Activated CD4-positive, alpha-beta T cell treated with anti-CD3 and anti-CD28 coated beads, Interleukin-2, amount 10 ng/mL, durations not matched to agents 7 days and 5 days (primary cell): ENCODE measurements at regions of chr11 and their contacts with region 1.

Region 1: GRCh38 chr11:117697321-117697720 is 99.7 kb downstream of the DSCAML1 start:
- DNase-seq: no peak
- H3K4me3 Mint-ChIP-seq: no peak overlapping the region
- H3K27ac Mint-ChIP-seq: no peak overlapping the region
- H3K4me1 Mint-ChIP-seq: peaks cover 8% of the 10 kb centered on the region
- H3K27me3 Mint-ChIP-seq: peaks cover 7% of the 10 kb centered on the region

Region 2: DNA sequence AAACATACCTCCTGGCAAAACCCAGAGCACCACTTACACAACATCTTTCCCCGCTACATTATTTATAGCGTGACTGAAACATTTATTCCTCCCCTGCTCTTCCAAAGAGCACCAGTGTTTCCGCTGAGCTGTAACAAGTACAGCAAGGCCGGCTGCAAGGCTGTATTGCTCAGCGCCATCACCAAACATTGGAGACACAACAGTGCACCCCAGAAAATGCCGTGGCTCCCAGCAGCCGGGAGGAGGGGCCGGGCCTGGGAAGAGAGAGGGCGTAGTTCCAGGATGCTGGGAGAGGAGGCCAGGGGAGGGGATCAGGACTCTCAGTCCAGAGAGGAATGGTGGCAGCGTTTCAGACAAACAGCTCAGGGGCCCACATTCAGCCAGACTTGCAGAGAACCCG is 33.5 kb before region 1 on chr11:
- CTCF ChIA-PET with region 1: no interaction called
- POLR2A ChIA-PET with region 1: no interaction called
- DNase-seq: no peak
- H3K4me3 Mint-ChIP-seq: no peak overlapping the region
- H3K27ac Mint-ChIP-seq: no peak overlapping the region
- H3K4me1 Mint-ChIP-seq: no peaks in the 10 kb centered on the region
- H3K27me3 Mint-ChIP-seq: no peaks in the 10 kb centered on the region

Region 3: DNA sequence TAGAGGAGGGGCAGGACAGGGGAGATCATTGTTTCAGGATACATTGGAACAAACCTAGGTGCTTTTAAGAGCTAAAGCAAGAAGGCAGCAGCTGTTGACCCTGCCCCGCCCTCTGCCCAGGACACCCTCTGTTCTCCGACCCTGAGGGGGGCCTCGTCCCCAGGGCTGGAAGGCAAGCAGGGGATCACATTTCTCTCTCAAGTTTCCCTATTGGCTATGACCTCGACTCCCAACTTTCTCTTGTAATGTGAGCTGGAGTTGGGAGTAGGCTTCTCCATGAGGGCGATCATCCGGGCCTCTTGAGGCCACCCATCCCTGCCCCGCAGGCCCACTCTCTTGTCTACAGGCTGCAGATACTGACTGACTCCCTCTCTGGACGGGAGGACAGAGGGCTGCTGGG is 62.0 kb after region 1 on chr11:
- CTCF ChIA-PET with region 1: no interaction called
- POLR2A ChIA-PET with region 1: no interaction called
- DNase-seq: no peak
- H3K4me3 Mint-ChIP-seq: no peak overlapping the region
- H3K27ac Mint-ChIP-seq: no peak overlapping the region
- H3K4me1 Mint-ChIP-seq: no peaks in the 10 kb centered on the region
- H3K27me3 Mint-ChIP-seq: no peaks in the 10 kb centered on the region

Region 4: DNA sequence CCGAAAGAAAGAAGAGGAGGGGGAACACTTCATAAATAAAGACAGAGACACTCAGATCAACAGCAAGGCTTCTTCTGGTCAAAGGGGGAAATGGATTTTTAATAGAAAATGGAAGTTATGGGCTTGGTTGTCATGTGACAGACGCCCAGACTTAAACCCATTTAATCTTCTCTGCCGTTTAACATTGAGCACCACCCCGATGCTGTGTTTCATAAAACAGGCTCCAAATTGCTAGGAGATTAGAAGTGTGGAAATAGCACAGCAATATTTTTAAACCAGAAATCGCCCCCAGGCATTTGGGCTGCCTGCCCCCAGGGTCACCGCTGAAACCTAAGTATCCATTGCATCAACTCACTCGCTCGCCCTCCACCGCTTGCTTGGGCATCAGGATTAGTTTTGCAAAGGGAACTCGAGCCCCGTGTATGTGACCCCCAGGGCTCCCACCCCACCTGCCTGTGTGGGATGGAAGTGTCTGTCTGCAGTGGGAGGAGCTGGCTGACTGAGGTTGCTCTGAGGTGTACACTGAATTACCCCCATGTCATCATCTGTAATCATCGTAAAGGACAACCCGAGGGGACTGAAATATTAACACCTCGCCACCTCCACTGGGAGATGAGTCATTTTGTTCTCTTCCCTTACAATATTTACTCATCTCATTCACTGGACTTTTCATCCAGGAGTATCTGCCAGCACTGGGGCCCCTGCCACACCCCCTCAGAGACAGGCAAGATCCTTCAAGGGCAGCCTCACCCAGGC is 89.0 kb after region 1 on chr11:
- CTCF ChIA-PET with region 1: no interaction called
- POLR2A ChIA-PET with region 1: interaction called, 10 read pairs
- DNase-seq: no peak
- H3K4me3 Mint-ChIP-seq: no peak overlapping the region
- H3K27ac Mint-ChIP-seq: no peak overlapping the region
- H3K4me1 Mint-ChIP-seq: no peaks in the 10 kb centered on the region
- H3K27me3 Mint-ChIP-seq: peaks cover 23% of the 10 kb centered on the region

Region 5: DNA sequence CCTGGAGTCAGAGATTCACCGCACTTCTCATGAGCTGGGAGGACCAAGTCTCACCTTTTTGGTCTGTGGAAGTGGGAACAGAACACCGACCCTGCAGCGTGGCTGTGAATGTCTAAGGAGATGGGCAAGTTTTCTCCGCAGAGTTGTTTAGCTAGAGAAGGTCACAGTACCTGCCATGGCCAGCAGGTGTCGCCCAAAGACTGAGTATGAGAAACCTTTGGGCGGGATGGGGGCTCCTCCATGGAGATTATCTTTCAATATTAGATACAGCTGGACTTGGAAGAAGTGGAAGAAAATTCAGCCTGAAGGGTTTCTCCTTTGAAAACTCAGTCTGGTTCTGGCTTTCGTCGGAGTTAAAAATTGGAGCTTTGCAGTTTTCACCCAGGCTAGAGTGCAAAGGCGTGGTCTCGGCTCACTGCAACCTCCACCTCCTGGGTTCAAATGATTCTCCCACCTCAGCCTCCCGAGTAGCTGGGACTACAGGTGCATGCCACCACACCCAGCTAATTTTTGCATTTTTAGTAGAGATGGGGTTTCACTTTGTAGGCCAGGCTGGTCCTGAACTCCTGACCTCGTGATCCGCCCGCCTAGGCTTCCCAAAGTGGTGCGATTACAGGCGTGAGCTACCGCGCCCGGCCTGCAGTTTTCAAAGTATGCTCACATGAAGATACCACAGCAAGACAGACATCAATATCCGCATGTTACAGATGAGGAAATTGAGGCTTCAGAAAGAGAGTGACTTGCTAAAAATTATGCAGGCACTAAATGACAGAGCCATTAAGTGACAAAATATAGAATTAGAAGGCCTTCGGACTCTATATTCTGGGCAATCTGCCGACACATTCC is 110.4 kb after region 1 on chr11:
- CTCF ChIA-PET with region 1: no interaction called
- POLR2A ChIA-PET with region 1: no interaction called
- DNase-seq: peak; percentile 80
- H3K4me3 Mint-ChIP-seq: no peak overlapping the region
- H3K27ac Mint-ChIP-seq: no peak overlapping the region
- H3K4me1 Mint-ChIP-seq: peaks cover 18% of the 10 kb centered on the region
- H3K27me3 Mint-ChIP-seq: peaks cover 10% of the 10 kb centered on the region